ENCODE measurements at regions of chr22 and their contacts with region 1.

Region 1: DNA sequence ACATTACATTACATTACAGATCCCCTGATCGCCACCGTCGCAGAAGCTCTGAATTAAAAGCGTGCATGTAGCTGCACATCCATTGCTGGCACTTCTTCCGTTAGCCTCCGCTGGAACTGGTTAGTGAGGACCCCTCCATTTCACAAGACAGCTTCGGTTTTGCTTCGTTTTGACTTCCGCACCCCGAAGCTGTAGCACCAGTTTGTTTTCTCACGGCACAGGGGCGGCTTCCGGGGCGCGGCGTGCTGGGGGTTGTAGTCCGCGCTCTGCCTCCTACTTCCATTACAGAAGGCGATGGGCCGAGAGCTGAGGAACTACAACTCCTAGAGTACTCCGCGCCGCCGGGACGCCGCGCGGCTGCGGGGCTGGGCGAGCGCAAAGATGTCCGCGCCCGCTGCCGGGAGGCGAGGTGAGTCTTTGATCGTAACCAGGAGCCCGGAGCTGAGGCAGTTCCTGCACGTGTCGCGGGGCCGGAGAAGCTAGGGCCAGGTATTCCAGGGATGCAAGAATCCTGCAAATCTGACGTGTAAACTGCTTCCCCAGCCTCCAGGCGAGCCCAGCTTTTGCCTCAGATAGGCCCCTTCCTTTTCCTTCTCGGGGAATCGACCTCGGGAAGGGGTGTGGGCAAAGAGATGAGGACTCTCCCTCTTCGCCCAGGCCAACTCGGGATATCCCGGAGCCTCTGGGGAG is at the start of gene PEX26:
- DNase-seq: peak; percentile 97
- total RNA-seq, gene PEX26: 24.9 TPM

Region 2: GRCh38 chr22:17742527-17742902 is 335.3 kb before region 1 on chr22:
- intact Hi-C with region 1: loop called (anchors 2 kb)
- DNase-seq: no peak

Region 3: DNA sequence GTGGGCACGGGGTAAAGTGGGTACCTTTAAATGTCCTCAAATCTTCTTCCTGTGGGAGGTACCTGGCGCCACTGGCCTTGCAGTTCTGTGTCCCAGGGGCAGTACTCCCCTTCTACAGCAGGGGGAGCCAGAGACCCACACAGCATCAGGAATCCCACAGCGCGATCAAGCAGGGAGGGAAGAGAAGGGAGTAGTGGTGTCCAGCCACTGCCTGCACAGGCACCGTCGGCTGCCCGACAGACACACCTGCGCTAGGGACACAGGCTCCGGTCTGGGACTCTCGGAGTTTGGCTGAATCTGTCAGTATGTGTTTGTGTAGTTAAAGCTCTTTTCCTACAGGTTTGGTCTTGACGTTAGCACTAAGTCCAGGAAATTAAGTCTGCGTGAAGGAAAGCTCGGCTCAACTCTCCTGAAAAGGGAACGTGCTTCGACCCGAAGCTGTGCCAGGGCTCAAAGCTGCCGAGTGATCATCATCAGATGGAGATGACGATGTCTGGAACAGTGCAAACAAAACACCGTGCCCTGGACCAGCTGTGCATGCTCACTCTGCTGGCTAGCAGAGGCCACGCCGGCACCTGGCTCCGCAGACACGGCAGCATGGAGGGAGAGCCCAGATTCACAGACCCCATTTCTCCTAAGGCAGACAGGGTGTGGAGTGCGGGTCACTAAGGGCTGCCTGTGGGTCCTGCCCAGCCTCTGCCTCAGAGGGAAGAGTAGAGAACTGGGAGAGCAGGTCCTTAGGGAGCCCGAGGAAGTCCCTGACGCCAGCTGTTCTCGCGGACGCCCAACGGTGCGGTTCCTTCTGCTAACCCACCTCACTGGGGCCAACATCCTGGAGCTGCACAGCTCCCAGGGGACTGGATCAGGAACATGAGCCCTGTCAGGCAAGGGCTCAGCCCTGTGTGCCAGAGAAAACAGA is 247.5 kb before region 1 on chr22:
- intact Hi-C with region 1: loop called (anchors 1 kb)
- DNase-seq: peak; percentile 92

Region 4: DNA sequence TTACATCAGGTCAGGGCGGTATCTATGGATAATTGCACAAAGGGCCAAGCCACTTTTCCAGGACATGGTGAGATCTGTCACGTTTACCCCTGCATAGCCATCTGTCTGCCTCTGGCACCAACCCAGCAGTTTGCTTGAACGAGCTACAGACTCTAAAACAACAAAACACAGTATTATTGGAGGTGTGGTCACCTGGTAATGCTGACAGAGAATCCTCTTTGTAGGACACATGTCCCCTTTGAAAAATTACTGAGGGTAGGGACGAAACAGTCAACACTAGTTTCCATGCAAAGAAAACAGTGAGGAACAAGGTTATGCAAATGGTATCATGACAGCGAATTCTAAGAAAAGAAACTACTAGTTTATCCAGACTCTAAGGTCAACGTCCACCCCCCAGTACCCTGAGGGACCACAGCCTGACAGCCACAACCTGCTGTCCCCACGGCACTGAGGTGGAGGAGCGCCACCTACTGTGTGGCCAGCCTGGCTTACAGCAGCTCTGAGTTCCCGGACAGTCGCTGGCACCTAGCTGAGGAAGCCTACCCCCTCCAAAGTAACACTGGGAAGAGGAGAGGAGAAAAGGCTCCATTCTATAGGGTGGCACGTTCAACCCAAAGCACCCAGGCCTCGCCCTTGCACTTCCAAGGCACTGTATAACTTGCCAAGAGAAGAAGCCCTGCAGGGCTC is 186.2 kb before region 1 on chr22:
- intact Hi-C with region 1: loop called (anchors 5 kb)
- DNase-seq: no peak

Region 5: GRCh38 chr22:18001040-18001893 is 76.5 kb before region 1 on chr22:
- intact Hi-C with region 1: loop called (anchors 2 kb)
- DNase-seq: peak; percentile 93

Region 6: DNA sequence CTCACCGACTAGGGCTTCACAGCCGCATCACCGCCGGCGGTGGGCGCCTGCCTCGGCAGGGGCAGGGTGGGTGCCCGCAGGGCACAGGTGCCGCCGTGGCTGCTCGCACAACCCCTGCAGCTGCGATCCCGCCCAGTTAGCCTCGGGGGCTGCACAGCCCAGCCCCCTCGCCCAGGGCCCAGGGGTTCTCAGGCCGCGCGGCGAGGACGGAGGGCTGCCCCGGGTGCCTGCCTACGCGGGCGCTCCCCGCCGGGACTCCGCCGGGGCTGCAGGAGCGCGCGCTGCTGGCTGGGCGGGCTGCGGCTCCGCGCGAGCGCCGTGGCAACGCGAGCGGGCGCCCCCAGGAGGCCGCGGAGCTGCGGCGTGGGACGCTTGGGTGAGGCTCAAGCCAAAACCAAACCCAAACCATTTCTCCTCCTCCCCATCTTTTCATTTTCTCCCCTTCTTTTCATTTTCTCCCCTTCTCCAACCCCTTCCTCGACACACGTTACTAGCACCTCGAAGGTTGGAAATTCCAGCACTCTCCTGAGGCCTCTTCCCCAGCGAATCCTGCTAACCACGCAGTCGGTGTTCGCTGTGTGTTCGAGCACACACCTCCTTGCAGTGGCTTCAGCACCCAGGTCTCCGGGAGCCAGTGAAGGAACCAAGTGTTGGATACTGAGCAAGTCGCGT is 53.4 kb before region 1 on chr22 and contains the start of gene MICAL3:
- intact Hi-C with region 1: loop called (anchors 5 kb)
- DNase-seq: no peak
- total RNA-seq, gene MICAL3: 126 TPM